ENCODE measurements at regions of chr5 and their contacts with region 1.

Region 1: GRCh38 chr5:40688127-40688761 is 8.5 kb downstream of the PTGER4 start:
- DNase-seq: peak; percentile 81
- H3K4me3 Mint-ChIP-seq: peak overlapping the region; percentile 99
- H3K27ac Mint-ChIP-seq: peak overlapping the region; percentile 91
- H3K4me1 Mint-ChIP-seq: peaks cover 71% of the 10 kb centered on the region
- H3K27me3 Mint-ChIP-seq: no peaks in the 10 kb centered on the region

Region 2: GRCh38 chr5:39177631-39177964 is 1510.6 kb before region 1 on chr5:
- intact Hi-C with region 1: loop called (anchors 5 kb)
- DNase-seq: no peak
- H3K4me3 Mint-ChIP-seq: peak overlapping the region; percentile 78
- H3K27ac Mint-ChIP-seq: peak overlapping the region; percentile 77
- H3K4me1 Mint-ChIP-seq: peaks cover 89% of the 10 kb centered on the region
- H3K27me3 Mint-ChIP-seq: no peaks in the 10 kb centered on the region

Region 3: GRCh38 chr5:40021007-40021406 is 667.2 kb before region 1 on chr5:
- intact Hi-C with region 1: loop called (anchors 2 kb)
- DNase-seq: no peak
- H3K4me3 Mint-ChIP-seq: no peak overlapping the region
- H3K27ac Mint-ChIP-seq: no peak overlapping the region
- H3K4me1 Mint-ChIP-seq: peaks cover 6% of the 10 kb centered on the region
- H3K27me3 Mint-ChIP-seq: peaks cover 2% of the 10 kb centered on the region

Region 4: GRCh38 chr5:40270274-40270845 is 417.9 kb before region 1 on chr5:
- intact Hi-C with region 1: no loop called
- DNase-seq: no peak
- H3K4me3 Mint-ChIP-seq: no peak overlapping the region
- H3K27ac Mint-ChIP-seq: peak overlapping the region; percentile 37
- H3K4me1 Mint-ChIP-seq: peaks cover 41% of the 10 kb centered on the region
- H3K27me3 Mint-ChIP-seq: no peaks in the 10 kb centered on the region

Region 5: DNA sequence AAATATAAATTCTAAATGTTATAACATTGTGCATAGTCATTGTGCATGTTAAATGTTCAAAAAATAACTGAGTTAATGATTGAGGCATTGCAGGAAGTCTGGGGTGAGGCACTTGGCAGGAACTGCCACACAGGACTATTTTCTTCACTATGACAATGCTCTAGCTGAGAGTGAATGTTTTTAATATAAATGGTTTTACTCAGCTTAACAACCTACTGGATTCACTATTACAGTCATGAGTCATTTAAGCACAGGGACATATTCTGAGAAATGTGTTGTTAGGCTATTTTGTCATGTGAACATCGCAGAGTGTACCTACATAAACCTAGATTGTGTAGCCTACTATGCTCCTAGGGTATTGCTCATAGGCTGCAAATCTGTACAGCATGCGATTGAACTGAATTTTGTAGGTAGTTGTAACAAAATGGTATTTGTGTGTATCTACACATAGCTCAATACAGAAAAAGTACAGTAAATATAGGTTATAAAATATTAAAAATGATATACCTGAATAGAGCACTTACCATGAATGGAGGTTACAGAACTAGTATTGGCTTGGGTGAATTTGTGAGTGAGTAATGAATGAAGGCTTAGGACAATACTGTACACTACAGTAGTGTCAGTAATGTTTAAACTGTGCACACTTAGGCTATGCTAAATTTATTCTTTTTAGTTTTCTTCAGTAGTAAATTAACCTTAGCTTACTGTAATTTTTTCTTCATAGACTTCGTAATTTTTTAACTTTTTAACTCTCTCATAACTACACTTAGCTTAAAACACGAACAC is 354.6 kb before region 1 on chr5:
- intact Hi-C with region 1: loop called (anchors 1 kb)
- DNase-seq: no peak
- H3K4me3 Mint-ChIP-seq: no peak overlapping the region
- H3K27ac Mint-ChIP-seq: peak overlapping the region; percentile 27
- H3K4me1 Mint-ChIP-seq: peaks cover 43% of the 10 kb centered on the region
- H3K27me3 Mint-ChIP-seq: no peaks in the 10 kb centered on the region

Region 6: GRCh38 chr5:40437452-40437861 is 250.8 kb before region 1 on chr5:
- intact Hi-C with region 1: loop called (anchors 1 kb)
- DNase-seq: no peak
- H3K4me3 Mint-ChIP-seq: peak overlapping the region; percentile 13
- H3K27ac Mint-ChIP-seq: peak overlapping the region; percentile 71
- H3K4me1 Mint-ChIP-seq: peaks cover 84% of the 10 kb centered on the region
- H3K27me3 Mint-ChIP-seq: no peaks in the 10 kb centered on the region

Region 7: GRCh38 chr5:40578501-40579451 is 109.5 kb before region 1 on chr5:
- intact Hi-C with region 1: loop called (anchors 1 kb)
- DNase-seq: peak; percentile 40
- H3K4me3 Mint-ChIP-seq: peak overlapping the region; percentile 68
- H3K27ac Mint-ChIP-seq: peak overlapping the region; percentile 92
- H3K4me1 Mint-ChIP-seq: peaks cover 42% of the 10 kb centered on the region
- H3K27me3 Mint-ChIP-seq: no peaks in the 10 kb centered on the region

Region 8: GRCh38 chr5:40879163-40879942 is 191.1 kb after region 1 on chr5:
- intact Hi-C with region 1: loop called (anchors 2 kb)
- DNase-seq: no peak
- H3K4me3 Mint-ChIP-seq: no peak overlapping the region
- H3K27ac Mint-ChIP-seq: no peak overlapping the region
- H3K4me1 Mint-ChIP-seq: peaks cover 5% of the 10 kb centered on the region
- H3K27me3 Mint-ChIP-seq: peaks cover 10% of the 10 kb centered on the region

Measured in activated T-helper 1 cell treated with anti-CD3 and anti-CD28 coated beads, Interleukin-12 subunit alpha, Interleukin-12 subunit beta, Interleukin-2, Interleukin-4 antibody, amounts not matched to agents 30 ng/mL and 10 ng/mL and 1 ng/mL, durations not matched to agents 14 hours and 24 hours and 36 hours (primary cell).